Activated B cell treated with CpG ODN at 0.5 μM for 24 hours (primary cell): ENCODE measurements at regions of chr19 and their contacts with region 1.

Region 1: DNA sequence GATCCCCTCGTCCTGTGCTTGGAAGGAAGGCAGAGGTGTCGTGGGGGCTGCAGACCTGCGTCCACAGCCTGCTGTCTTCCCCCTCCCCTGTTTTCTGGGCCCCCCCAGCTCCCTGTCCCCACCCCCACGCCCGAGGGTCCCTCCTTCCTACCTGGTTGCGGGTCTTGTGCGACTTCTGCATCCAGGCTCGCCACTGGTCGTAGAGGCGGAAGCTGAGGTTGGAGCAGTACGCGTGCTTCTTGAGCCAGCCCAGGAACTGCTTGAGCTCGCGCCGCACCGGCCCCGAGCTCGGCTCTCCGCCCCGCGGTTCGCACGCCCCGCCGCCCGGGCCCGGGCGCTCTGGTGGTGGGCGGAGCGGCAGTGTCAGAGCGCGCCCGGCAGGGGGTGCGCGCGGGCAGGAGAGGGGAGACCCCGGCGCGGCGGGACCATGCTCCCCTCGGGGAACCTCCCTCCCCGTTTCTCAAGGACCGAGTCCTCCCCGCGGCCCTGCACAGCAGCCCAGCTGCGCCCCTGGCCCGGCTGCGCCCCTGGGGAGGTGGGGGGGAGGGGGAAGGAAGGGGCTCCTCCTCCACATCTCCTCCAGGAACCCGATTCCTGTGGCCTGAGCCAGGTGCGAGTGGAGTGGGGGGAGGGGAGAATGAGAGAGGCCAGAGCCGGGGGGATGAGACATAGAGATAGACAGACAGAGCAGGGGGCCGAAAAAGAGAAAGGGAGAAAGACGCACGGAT is 5.7 kb downstream of the REX1BD start:
- DNase-seq: peak; percentile 75
- ATAC-seq: peak; percentile 83
- H3K4me3 Mint-ChIP-seq: peak overlapping the region; percentile 76
- H3K27ac Mint-ChIP-seq: no peak overlapping the region
- H3K4me1 Mint-ChIP-seq: peaks cover 29% of the 10 kb centered on the region
- H3K27me3 Mint-ChIP-seq: peaks cover 5% of the 10 kb centered on the region
- CTCF ChIP-seq: no peak

Region 2: DNA sequence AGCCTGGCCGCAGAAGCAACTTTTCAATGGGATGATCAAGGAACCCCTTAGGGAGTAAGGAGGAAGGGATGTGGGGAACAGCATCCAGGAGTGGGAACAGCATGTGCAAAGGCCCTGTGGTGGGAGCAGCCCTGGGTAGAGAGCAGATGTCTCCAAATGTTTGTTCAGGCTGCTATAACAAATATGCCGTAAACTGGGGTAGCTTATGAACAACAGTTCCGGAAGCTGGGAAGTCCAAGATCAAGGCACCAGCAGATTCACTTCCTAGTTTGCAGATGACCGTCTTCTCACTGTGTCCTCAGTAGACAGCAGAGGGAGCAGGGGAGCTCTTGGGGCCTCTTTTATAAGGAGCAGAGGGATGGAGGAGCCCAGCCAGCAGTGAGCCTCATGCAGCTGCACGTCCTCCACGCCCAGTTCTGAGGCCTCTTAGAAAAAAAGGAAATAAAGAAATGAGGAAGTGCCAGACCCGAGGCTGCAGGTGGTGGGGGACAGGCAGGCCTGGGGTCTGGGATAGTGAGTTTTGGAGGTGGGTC is 192.6 kb before region 1 on chr19:
- CTCF ChIA-PET with region 1: no interaction called
- POLR2A ChIA-PET with region 1: no interaction called
- intact Hi-C with region 1: no loop called
- DNase-seq: peak; percentile 50
- ATAC-seq: peak; percentile 74
- H3K4me3 Mint-ChIP-seq: peak overlapping the region; percentile 70
- H3K27ac Mint-ChIP-seq: peak overlapping the region; percentile 88
- H3K4me1 Mint-ChIP-seq: peaks cover 52% of the 10 kb centered on the region
- H3K27me3 Mint-ChIP-seq: no peaks in the 10 kb centered on the region
- CTCF ChIP-seq: no peak

Region 3: DNA sequence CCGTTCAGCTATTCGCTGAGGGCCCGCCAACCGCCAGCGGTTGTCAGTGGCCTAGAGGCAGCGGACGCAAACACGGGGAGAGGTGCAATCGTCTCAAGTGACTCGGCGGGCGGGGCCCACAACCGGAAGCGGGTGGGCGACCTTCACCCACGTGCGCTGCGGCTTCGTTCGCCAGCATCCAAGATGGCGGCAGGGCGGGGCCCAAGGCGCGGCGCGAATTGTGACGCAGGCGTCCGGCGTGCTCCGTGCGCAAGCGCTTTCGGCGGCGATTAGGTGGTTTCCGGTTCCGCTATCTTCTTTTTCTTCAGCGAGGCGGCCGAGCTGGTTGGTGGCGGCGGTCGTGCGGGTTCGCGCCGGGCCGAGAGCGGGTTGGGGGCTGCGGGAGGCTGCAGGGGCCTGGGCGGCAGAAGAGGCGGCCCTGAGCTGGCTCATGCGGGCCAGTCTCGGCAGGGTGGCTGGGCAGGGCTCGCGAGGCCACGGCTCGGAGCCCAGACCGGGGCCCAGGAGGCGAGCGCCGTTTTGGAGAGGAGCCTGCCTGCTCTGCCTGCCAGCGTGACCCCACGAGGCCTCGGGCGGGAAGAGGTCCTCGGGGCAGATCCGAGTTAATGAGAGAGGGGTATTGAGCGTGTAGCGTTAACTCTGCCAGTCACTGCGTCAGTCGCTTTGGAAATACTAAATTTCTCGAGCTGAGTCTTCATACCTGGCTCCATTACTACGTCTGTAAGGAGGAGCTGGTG is 22.5 kb before region 1 on chr19 and contains the start of gene UBA52:
- CTCF ChIA-PET with region 1: interaction called, 17 read pairs
- POLR2A ChIA-PET with region 1: interaction called, 55 read pairs
- intact Hi-C with region 1: no loop called
- DNase-seq: peak; percentile 100
- ATAC-seq: peak; percentile 93
- H3K4me3 Mint-ChIP-seq: peak within 1 kb of the TSS; percentile 94
- H3K27ac Mint-ChIP-seq: peak within 1 kb of the TSS; percentile 93
- H3K4me1 Mint-ChIP-seq: peaks cover 30% of the 10 kb centered on the region
- H3K27me3 Mint-ChIP-seq: no peaks in the 10 kb centered on the region
- CTCF ChIP-seq: no peak
- total RNA-seq, gene UBA52: 1,962 and 2,164 TPM in 2 replicates

Region 4: GRCh38 chr19:18675779-18676178 is 81.5 kb after region 1 on chr19:
- CTCF ChIA-PET with region 1: interaction called, 4 read pairs
- POLR2A ChIA-PET with region 1: interaction called, 4 read pairs
- intact Hi-C with region 1: loop called (anchors 1 kb)
- DNase-seq: no peak
- ATAC-seq: no peak
- H3K4me3 Mint-ChIP-seq: no peak overlapping the region
- H3K27ac Mint-ChIP-seq: no peak overlapping the region
- H3K4me1 Mint-ChIP-seq: no peaks in the 10 kb centered on the region
- H3K27me3 Mint-ChIP-seq: peaks cover 2% of the 10 kb centered on the region
- CTCF ChIP-seq: no peak

Region 5: DNA sequence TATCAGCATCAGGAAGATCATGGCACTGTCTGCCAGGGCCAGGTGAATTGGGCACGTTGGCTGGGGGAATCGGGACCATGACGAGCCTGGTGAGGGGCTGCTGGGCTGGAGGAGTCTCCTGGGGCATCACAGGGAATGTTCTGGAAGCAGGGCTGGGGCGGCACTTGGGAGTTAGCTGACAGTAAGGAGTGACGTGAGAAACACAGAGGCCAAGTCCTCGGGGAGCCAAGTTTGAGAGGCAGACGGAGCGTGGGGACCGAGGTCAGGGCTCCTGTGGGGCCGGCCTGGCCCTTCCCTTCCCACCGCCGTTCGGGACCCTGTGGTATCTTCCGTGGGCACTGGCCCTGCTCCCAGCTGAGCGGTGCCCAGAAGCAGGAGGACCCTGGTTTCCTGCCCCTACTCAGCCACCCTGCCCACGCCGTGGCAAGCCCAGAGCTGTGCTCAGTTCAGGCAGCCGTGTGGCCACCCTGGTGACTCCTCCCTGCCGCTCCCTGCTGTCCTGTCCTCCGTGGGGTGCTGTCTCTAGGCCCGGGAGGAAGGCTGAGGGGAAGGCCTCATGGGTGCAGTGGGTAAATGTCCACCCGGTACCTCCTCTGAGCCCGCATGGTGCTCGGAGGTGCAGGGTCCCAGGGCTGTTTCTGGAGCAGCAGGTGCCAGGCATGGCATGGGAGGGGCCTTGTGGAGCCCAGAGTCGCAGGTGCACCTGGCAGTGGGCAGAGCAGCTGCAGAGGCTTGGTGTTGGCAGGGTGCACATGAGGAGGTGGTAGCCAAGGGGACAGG is 114.4 kb after region 1 on chr19:
- CTCF ChIA-PET with region 1: no interaction called
- POLR2A ChIA-PET with region 1: no interaction called
- intact Hi-C with region 1: no loop called
- DNase-seq: no peak
- ATAC-seq: no peak
- H3K4me3 Mint-ChIP-seq: no peak overlapping the region
- H3K27ac Mint-ChIP-seq: no peak overlapping the region
- H3K4me1 Mint-ChIP-seq: peaks cover 22% of the 10 kb centered on the region
- H3K27me3 Mint-ChIP-seq: no peaks in the 10 kb centered on the region
- CTCF ChIP-seq: no peak

Region 6: DNA sequence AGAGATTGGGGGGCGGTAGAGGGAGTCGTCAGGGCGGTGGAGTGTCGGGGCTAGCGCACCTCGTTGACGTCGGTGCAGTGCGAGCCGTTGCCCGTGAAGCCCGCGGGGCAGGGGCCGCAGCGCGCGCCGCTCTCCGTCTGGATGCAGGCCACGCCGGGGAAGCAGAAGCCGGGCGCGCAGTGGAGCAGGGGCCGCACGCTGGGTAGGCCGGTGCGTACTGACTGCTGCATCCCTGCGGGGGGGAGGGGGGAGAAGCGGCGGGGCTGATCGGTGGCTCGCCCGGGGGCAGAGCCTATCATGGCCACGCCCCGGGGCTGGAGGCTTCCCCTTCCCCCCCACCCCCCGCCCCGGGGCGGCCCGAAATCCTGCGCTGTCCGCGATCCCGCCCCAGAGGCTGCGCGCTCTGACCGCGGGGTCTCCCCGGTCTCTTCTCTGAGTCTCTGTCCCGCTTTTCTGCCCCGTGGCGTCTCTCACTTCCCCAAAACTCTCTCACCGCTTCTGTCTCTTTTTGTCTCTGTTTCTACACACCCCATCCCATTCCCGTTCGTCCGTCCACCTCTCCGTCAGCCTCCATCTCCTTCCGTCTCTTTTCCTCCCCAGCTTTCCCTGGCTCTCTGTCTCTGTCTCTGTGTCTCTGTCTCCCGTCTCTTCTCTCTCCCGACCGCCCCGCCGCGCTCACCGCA is 195.8 kb after region 1 on chr19:
- CTCF ChIA-PET with region 1: no interaction called
- POLR2A ChIA-PET with region 1: no interaction called
- intact Hi-C with region 1: no loop called
- DNase-seq: peak; percentile 38
- ATAC-seq: peak; percentile 64
- H3K4me3 Mint-ChIP-seq: peak overlapping the region; percentile 82
- H3K27ac Mint-ChIP-seq: peak overlapping the region; percentile 69
- H3K4me1 Mint-ChIP-seq: peaks cover 41% of the 10 kb centered on the region
- H3K27me3 Mint-ChIP-seq: peaks cover 62% of the 10 kb centered on the region
- CTCF ChIP-seq: no peak

Region 7: GRCh38 chr19:18846862-18847548 is 252.7 kb after region 1 on chr19:
- CTCF ChIA-PET with region 1: interaction called, 38 read pairs
- POLR2A ChIA-PET with region 1: interaction called, 4 read pairs
- intact Hi-C with region 1: loop called (anchors 1 kb)
- DNase-seq: peak; percentile 56
- ATAC-seq: peak; percentile 77
- H3K4me3 Mint-ChIP-seq: no peak overlapping the region
- H3K27ac Mint-ChIP-seq: peak overlapping the region; percentile 46
- H3K4me1 Mint-ChIP-seq: peaks cover 75% of the 10 kb centered on the region
- H3K27me3 Mint-ChIP-seq: no peaks in the 10 kb centered on the region
- CTCF ChIP-seq: peak; percentile 35

Region 8: GRCh38 chr19:18865973-18866799 is 271.9 kb after region 1 on chr19:
- CTCF ChIA-PET with region 1: interaction called, 3 read pairs
- POLR2A ChIA-PET with region 1: no interaction called
- intact Hi-C with region 1: loop called (anchors 1 kb)
- DNase-seq: peak; percentile 64
- ATAC-seq: peak; percentile 82
- H3K4me3 Mint-ChIP-seq: no peak overlapping the region
- H3K27ac Mint-ChIP-seq: no peak overlapping the region
- H3K4me1 Mint-ChIP-seq: peaks cover 15% of the 10 kb centered on the region
- H3K27me3 Mint-ChIP-seq: peaks cover 4% of the 10 kb centered on the region
- CTCF ChIP-seq: peak; percentile 60